Calu3 (cell line): ENCODE measurements at regions of chr5 and their contacts with region 1.

Region 1: DNA sequence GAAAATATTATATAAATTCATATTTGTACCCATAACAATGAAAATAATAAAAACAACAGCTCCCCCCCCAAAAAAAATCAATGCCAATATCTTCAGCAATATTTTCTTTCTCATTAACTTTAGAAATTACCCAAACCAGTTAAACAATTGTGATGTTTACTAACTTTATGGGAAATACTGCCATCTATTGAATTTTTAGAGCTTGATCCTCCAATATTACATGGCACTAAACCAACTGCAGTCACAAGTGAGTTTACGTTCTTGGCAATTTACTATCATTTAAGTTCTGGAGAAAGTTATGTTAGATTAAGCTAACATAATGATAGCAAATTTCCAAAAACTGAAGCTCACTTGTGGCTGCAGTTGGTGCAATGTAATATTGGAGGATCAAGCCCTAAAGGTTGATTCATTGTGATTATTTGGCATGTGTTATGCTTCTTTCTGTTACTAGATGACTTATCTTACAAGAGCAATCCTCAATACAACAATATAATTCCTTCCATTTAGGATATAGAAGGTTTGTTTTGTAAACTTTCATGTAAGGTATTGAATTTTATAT is 379.5 kb downstream of the CDH18 start:
- DNase-seq: no peak
- H3K4me3 Mint-ChIP-seq: no peak overlapping the region
- H3K27ac Mint-ChIP-seq: no peak overlapping the region
- H3K4me1 Mint-ChIP-seq: no peaks in the 10 kb centered on the region
- H3K27me3 Mint-ChIP-seq: no peaks in the 10 kb centered on the region
- CTCF ChIP-seq: no peak

Region 2: GRCh38 chr5:18393589-18394442 is 1214.7 kb before region 1 on chr5:
- CTCF ChIA-PET with region 1: no interaction called
- intact Hi-C with region 1: loop called (anchors 5 kb)
- DNase-seq: peak; percentile 64
- H3K4me3 Mint-ChIP-seq: no peak overlapping the region
- H3K27ac Mint-ChIP-seq: no peak overlapping the region
- H3K4me1 Mint-ChIP-seq: no peaks in the 10 kb centered on the region
- H3K27me3 Mint-ChIP-seq: no peaks in the 10 kb centered on the region
- CTCF ChIP-seq: peak; percentile 80

Region 3: GRCh38 chr5:18465833-18466591 is 1142.5 kb before region 1 on chr5:
- CTCF ChIA-PET with region 1: no interaction called
- intact Hi-C with region 1: loop called (anchors 1 kb)
- DNase-seq: peak; percentile 69
- H3K4me3 Mint-ChIP-seq: no peak overlapping the region
- H3K27ac Mint-ChIP-seq: peak overlapping the region; percentile 56
- H3K4me1 Mint-ChIP-seq: no peaks in the 10 kb centered on the region
- H3K27me3 Mint-ChIP-seq: no peaks in the 10 kb centered on the region
- CTCF ChIP-seq: peak; percentile 49

Region 4: DNA sequence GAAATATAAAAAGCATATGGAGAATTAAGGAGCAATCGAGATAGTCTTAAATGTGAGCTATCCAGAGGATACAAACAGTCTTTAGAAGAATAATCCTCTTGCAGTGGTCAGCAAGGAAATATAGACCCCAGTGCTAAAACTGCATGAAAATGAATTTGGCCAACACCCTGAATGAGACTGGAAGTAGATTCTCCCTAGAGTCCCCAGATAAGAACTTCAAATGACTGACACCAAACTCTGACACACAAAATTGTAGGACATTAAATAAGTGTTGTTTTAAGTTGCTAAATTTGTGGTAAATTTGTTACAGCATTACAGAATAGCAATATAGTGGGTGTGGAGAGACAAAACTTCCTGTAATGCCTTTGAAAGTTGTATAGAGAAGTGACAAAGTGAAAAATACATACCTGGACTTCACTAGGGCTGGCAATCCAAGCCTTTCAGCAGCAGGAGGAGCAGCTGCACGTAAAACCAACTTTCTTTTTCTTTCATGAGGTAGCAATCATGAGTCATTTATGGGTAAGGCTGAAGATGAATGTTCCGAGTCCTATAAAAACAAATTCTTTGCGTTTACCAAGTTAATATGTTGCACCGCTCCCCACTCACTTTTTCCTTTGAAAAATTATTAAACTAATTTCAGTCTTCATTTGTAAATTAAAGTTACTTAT is 836.2 kb before region 1 on chr5:
- CTCF ChIA-PET with region 1: no interaction called
- intact Hi-C with region 1: loop called (anchors 1 kb)
- DNase-seq: peak; percentile 43
- H3K4me3 Mint-ChIP-seq: no peak overlapping the region
- H3K27ac Mint-ChIP-seq: peak overlapping the region; percentile 69
- H3K4me1 Mint-ChIP-seq: no peaks in the 10 kb centered on the region
- H3K27me3 Mint-ChIP-seq: no peaks in the 10 kb centered on the region
- CTCF ChIP-seq: no peak

Region 5: DNA sequence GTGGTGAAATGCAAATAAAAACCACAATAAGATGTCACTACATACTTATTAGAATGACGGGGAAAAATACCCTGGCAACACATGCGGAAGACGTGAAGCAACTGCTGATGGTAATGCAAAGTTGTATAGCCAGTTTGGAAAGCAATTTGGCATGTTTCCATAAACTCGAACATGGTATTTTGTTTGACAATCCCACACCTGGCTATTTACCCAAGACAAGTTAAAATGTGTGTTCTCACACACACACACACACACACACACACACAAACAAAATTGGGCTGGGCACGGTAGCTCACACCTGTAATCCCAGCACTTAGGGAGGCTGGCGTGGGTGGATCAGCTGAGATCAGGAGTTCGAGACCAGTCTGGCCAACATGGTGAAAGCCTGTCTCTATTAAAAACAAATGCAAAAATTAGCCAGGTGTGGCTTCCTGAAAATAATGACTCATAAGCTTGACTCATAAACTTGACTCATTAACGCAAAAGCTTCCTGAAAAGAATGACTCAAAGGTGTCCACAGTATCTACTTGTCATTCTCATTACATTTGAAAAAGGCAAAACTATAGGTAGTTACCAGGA is 77.1 kb before region 1 on chr5:
- CTCF ChIA-PET with region 1: no interaction called
- intact Hi-C with region 1: loop called (anchors 5 kb)
- DNase-seq: peak; percentile 72
- H3K4me3 Mint-ChIP-seq: peak overlapping the region; percentile 61
- H3K27ac Mint-ChIP-seq: peak overlapping the region; percentile 97
- H3K4me1 Mint-ChIP-seq: peaks cover 29% of the 10 kb centered on the region
- H3K27me3 Mint-ChIP-seq: no peaks in the 10 kb centered on the region
- CTCF ChIP-seq: no peak

Region 6: GRCh38 chr5:19564036-19564435 is 44.5 kb before region 1 on chr5:
- CTCF ChIA-PET with region 1: no interaction called
- intact Hi-C with region 1: no loop called
- DNase-seq: no peak
- H3K4me3 Mint-ChIP-seq: no peak overlapping the region
- H3K27ac Mint-ChIP-seq: no peak overlapping the region
- H3K4me1 Mint-ChIP-seq: no peaks in the 10 kb centered on the region
- H3K27me3 Mint-ChIP-seq: no peaks in the 10 kb centered on the region
- CTCF ChIP-seq: no peak

Region 7: GRCh38 chr5:19880458-19881436 is 272.2 kb after region 1 on chr5:
- CTCF ChIA-PET with region 1: no interaction called
- intact Hi-C with region 1: no loop called
- DNase-seq: peak; percentile 4
- H3K4me3 Mint-ChIP-seq: no peak overlapping the region
- H3K27ac Mint-ChIP-seq: no peak overlapping the region
- H3K4me1 Mint-ChIP-seq: no peaks in the 10 kb centered on the region
- H3K27me3 Mint-ChIP-seq: no peaks in the 10 kb centered on the region
- CTCF ChIP-seq: no peak